Endothelial cell of umbilical vein (primary cell): ENCODE measurements at regions of chrX and their contacts with region 1.

Region 1: DNA sequence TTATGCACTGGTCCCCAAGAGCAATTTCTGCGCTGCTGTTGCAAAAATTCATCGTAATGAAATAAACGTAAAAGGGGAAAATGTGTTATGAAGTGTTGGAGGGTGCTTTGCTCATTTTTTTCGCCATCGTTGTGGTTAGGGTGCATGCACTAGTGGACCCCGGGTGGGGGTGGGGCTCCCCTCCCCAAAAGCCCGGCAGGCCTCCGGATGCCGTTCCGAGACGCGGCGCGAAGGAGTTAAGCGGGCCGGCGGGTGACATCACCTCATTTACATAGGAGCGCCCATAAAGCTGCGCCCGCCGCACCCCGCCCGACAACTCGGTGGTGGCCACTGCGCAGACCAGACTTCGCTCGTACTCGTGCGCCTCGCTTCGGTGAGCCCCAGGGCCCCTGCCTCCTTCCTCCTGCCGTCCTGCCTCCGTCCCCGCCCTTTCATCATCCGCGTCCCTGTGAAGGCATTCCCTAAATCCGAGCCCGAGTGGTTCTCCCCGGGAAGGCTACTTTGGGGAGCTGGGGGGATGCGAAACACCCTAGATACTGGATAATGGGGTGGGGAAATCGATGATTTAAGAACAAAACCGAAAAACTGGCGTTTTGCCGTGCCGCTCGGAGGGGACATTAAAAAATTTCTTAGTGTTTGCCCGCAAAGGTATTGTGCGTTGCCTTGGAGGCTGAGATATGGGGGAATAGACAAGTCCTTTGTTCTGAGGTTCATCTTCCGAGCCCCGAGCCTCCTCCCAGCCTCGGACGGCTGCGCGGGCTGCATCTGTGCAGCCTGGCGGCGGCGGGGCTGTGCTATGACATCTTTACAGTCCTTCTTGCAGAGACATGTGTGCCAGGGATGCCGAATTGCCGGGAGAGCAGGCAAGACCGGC is at the start of gene TMSB4X:
- DNase-seq: peak; percentile 73
- H3K4me3 ChIP-seq: peak within 1 kb of the TSS; percentile 96 to 97 (median 96)
- H3K27ac ChIP-seq: peak within 1 kb of the TSS; percentile 88
- H3K4me1 ChIP-seq: peaks cover 44% of the 10 kb centered on the region
- H3K27me3 ChIP-seq: no peaks in the 10 kb centered on the region
- CTCF ChIP-seq: no peak
- POLR2A ChIP-seq: peak; percentile 99
- total RNA-seq, gene TMSB4X: 6,742 and 6,858 TPM in 2 replicates

Region 2: GRCh38 chrX:12946838-12947544 is 28.0 kb before region 1 on chrX:
- CTCF ChIA-PET with region 1: interaction called, 64 read pairs
- POLR2A ChIA-PET with region 1: interaction called, 18 read pairs
- dilution Hi-C with region 1: no loop called
- intact Hi-C with region 1: loop called (anchors 1 kb)
- DNase-seq: peak; percentile 90
- H3K4me3 ChIP-seq: no peak overlapping the region
- H3K27ac ChIP-seq: peak overlapping the region; percentile 64
- H3K4me1 ChIP-seq: peaks cover 27% of the 10 kb centered on the region
- H3K27me3 ChIP-seq: no peaks in the 10 kb centered on the region
- CTCF ChIP-seq: peak; percentile 85 to 87
- POLR2A ChIP-seq: no peak

Region 3: GRCh38 chrX:13090339-13091110 is 115.5 kb after region 1 on chrX:
- CTCF ChIA-PET with region 1: no interaction called
- POLR2A ChIA-PET with region 1: interaction called, 10 read pairs
- dilution Hi-C with region 1: no loop called
- intact Hi-C with region 1: no loop called
- DNase-seq: peak; percentile 87
- H3K4me3 ChIP-seq: no peak overlapping the region
- H3K27ac ChIP-seq: peak overlapping the region; percentile 64
- H3K4me1 ChIP-seq: peaks cover 40% of the 10 kb centered on the region
- H3K27me3 ChIP-seq: no peaks in the 10 kb centered on the region
- CTCF ChIP-seq: no peak
- POLR2A ChIP-seq: no peak

Region 4: DNA sequence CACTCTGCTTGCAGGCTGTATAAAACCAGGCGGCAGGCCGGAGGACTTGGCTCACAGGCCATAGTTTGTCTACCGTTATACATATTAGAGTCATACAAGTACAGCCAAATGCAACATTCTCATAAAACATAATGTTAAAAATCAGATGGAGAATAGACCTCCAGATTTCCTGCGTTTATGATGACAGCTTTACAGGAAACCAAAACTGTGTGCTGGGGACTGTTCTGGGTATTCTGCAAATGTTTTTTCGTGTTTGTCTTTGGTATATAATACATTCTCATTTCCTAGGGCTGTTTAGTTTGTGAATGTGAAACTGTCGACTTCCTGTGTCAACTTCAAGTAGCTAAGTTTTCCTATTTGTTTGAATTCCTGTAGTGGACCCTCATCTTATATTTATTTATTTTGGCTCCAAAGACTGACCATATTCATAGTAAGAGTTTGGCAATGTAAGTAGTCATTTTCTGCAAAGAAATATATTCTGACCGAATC is 148.9 kb after region 1 on chrX:
- CTCF ChIA-PET with region 1: interaction called, 4 read pairs
- POLR2A ChIA-PET with region 1: interaction called, 16 read pairs
- dilution Hi-C with region 1: no loop called
- intact Hi-C with region 1: loop called (anchors 1 kb)
- DNase-seq: peak; percentile 93
- H3K4me3 ChIP-seq: no peak overlapping the region
- H3K27ac ChIP-seq: peak overlapping the region; percentile 91
- H3K4me1 ChIP-seq: peaks cover 59% of the 10 kb centered on the region
- H3K27me3 ChIP-seq: no peaks in the 10 kb centered on the region
- CTCF ChIP-seq: no peak
- POLR2A ChIP-seq: peak; percentile 45

Region 5: GRCh38 chrX:13212191-13212651 is 237.2 kb after region 1 on chrX:
- CTCF ChIA-PET with region 1: no interaction called
- POLR2A ChIA-PET with region 1: no interaction called
- dilution Hi-C with region 1: no loop called
- intact Hi-C with region 1: loop called (anchors 1 kb)
- DNase-seq: peak; percentile 82
- H3K4me3 ChIP-seq: no peak overlapping the region
- H3K27ac ChIP-seq: peak overlapping the region; percentile 63
- H3K4me1 ChIP-seq: peaks cover 24% of the 10 kb centered on the region
- H3K27me3 ChIP-seq: no peaks in the 10 kb centered on the region
- CTCF ChIP-seq: no peak
- POLR2A ChIP-seq: no peak

Region 6: DNA sequence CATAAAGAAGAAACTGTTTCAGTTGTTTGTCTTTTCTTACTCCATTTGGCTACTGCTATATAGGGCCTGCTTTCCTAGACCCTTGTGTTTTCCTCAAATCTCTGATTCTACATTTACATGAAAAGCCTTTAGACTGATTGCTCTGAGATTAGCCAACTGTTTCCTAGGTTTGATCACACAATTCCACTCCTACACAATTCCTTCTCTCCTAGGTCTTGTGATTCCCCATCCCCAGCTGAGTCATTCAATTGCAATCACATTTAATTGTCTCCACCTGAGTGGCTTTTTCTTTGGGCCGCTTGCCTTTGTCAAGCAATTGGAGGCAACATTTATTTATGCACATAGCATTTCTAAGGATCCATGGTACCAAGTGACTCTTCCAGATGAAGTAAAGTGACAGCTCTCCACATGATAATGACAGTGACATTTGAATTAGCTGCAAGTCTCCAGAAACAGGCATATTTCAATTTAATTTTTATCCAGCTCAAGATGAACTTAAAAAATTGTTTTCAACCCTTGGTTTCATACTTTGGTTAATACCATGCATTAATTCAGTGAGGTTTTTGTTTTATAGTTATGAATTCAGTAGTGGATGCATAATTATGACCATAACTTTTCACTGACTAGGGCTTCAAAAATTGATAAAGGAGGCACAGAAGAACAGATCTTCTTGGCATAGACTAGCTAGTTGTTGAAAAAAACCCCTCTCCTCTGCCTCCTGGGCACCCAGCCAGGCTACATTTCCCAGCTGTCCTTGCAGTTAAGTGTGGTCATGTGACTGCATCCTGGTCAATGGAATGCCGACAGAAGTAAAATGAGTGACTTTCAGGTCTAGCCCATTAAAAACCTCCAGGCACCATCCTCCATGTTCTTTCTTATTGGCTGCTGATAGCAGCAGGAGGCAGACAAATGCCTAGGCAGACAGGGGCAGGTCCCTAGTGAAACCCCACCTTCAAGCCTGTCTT is 309.2 kb after region 1 on chrX:
- CTCF ChIA-PET with region 1: interaction called, 4 read pairs
- POLR2A ChIA-PET with region 1: interaction called, 12 read pairs
- dilution Hi-C with region 1: no loop called
- intact Hi-C with region 1: loop called (anchors 1 kb)
- DNase-seq: peak; percentile 71
- H3K4me3 ChIP-seq: no peak overlapping the region
- H3K27ac ChIP-seq: peak overlapping the region; percentile 62
- H3K4me1 ChIP-seq: peaks cover 49% of the 10 kb centered on the region
- H3K27me3 ChIP-seq: no peaks in the 10 kb centered on the region
- CTCF ChIP-seq: no peak
- POLR2A ChIP-seq: no peak

Region 7: DNA sequence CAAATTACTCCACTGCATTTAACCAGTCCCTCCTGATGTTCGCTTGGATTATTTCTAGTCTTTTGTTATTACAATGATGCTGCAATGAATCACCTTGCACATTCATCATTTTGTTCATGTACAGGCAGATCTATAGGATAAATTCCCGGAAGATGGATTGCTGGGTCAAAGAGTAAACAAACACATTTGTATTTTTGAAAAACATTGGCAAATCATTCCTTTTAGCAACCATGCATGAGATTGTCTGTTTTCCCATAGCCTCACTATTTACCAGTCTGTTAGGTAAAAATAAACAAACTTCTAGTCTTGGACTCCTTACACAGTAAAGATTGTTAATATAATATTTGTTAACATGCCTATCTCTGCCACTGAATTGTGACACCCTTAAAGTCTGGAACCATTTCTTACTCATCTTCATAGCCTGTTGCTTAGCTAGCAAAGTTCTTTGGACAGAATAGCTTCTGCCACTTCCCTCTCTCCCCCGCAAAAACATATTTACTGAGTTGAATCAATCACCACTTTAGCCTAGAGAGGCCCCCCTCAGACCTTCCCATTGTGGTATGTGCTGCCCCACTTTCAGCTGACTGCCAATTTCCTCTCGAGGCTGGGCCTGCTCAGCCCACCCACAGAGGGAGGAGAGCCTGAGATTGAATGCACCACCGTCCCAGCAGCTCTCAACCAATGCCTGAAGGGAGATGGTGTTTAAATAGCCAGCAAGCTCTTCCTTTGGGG is 453.2 kb after region 1 on chrX:
- CTCF ChIA-PET with region 1: no interaction called
- POLR2A ChIA-PET with region 1: interaction called, 3 read pairs
- dilution Hi-C with region 1: no loop called
- intact Hi-C with region 1: loop called (anchors 1 kb)
- DNase-seq: peak; percentile 76
- H3K4me3 ChIP-seq: no peak overlapping the region
- H3K27ac ChIP-seq: peak overlapping the region; percentile 68
- H3K4me1 ChIP-seq: peaks cover 30% of the 10 kb centered on the region
- H3K27me3 ChIP-seq: no peaks in the 10 kb centered on the region
- CTCF ChIP-seq: no peak
- POLR2A ChIP-seq: no peak